Dendritic cell treated with granulocyte-macrophage colony-stimulating factor and Interleukin-4, amounts not matched to agents 40 ng/mL and 50 ng/mL, for 4 days (primary cell): ENCODE measurements at regions of chr6 and their contacts with region 1.

Region 1: GRCh38 chr6:11064836-11065235 is 20.7 kb upstream of the ELOVL2 start:
- H3K4me3 Mint-ChIP-seq: no peak overlapping the region
- H3K27ac Mint-ChIP-seq: no peak overlapping the region
- H3K4me1 Mint-ChIP-seq: no peaks in the 10 kb centered on the region
- H3K27me3 Mint-ChIP-seq: peaks cover 6% of the 10 kb centered on the region

Region 2: DNA sequence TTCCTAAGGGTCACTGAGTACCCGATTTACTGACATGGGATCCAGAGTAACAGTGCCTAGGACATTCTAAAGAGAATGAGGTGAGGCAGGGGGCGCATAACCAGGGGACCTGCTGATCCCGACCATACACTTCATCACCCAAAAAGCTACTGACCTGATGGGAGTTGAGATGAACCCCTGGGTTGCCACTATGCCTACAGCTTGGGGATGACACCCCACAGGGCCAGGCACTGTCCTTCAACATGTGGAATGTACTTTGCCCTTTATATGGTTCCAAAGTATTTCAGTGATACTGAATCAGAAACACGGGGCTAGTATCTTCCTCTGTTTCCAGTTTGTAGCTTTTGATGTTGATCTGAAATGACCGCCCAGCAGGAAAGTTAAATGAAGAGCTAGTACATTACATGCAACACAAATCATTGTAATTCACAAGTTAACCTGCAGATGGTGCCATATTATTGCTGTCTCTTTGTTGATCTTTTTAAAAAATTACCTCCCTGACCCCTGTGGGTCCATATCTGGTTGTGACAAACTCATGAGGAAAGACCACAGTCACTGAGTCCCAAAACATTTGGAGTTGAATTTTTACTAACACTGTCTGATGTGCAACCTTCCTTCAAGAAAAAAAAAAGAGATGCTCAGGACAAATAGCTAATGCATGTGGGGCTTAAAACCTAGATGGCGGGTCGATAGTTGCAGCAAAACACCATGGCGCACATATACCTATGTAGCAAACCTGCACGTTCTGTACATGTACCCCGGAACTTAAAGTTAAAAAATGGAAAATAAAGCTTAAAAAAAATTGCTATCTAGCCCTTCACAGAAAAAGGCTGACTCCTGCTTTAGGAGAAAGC is 586.4 kb before region 1 on chr6:
- intact Hi-C with region 1: loop called (anchors 2 kb)
- H3K4me3 Mint-ChIP-seq: no peak overlapping the region
- H3K27ac Mint-ChIP-seq: no peak overlapping the region
- H3K4me1 Mint-ChIP-seq: no peaks in the 10 kb centered on the region
- H3K27me3 Mint-ChIP-seq: peaks cover 7% of the 10 kb centered on the region

Region 3: GRCh38 chr6:10747251-10747972 is 317.4 kb before region 1 on chr6 and contains the start of gene TMEM14B:
- intact Hi-C with region 1: no loop called
- H3K4me3 Mint-ChIP-seq: peak within 1 kb of the TSS; percentile 87
- H3K27ac Mint-ChIP-seq: peak within 1 kb of the TSS; percentile 92
- H3K4me1 Mint-ChIP-seq: peaks cover 34% of the 10 kb centered on the region
- H3K27me3 Mint-ChIP-seq: no peaks in the 10 kb centered on the region

Region 4: GRCh38 chr6:10847684-10848083 is 217.2 kb before region 1 on chr6:
- intact Hi-C with region 1: loop called (anchors 2 kb)
- H3K4me3 Mint-ChIP-seq: no peak overlapping the region
- H3K27ac Mint-ChIP-seq: no peak overlapping the region
- H3K4me1 Mint-ChIP-seq: no peaks in the 10 kb centered on the region
- H3K27me3 Mint-ChIP-seq: peaks cover 31% of the 10 kb centered on the region

Region 5: GRCh38 chr6:10954590-10955010 is 110.2 kb before region 1 on chr6:
- intact Hi-C with region 1: loop called (anchors 10 kb)
- H3K4me3 Mint-ChIP-seq: no peak overlapping the region
- H3K27ac Mint-ChIP-seq: no peak overlapping the region
- H3K4me1 Mint-ChIP-seq: no peaks in the 10 kb centered on the region
- H3K27me3 Mint-ChIP-seq: peaks cover 7% of the 10 kb centered on the region

Region 6: GRCh38 chr6:11381801-11382513 is 317.1 kb after region 1 on chr6:
- intact Hi-C with region 1: no loop called
- H3K4me3 Mint-ChIP-seq: no peak overlapping the region
- H3K27ac Mint-ChIP-seq: peak overlapping the region; percentile 63
- H3K4me1 Mint-ChIP-seq: peaks cover 44% of the 10 kb centered on the region
- H3K27me3 Mint-ChIP-seq: peaks cover 45% of the 10 kb centered on the region